ENCODE measurements at regions of chr1 and their contacts with region 1.

Region 1: DNA sequence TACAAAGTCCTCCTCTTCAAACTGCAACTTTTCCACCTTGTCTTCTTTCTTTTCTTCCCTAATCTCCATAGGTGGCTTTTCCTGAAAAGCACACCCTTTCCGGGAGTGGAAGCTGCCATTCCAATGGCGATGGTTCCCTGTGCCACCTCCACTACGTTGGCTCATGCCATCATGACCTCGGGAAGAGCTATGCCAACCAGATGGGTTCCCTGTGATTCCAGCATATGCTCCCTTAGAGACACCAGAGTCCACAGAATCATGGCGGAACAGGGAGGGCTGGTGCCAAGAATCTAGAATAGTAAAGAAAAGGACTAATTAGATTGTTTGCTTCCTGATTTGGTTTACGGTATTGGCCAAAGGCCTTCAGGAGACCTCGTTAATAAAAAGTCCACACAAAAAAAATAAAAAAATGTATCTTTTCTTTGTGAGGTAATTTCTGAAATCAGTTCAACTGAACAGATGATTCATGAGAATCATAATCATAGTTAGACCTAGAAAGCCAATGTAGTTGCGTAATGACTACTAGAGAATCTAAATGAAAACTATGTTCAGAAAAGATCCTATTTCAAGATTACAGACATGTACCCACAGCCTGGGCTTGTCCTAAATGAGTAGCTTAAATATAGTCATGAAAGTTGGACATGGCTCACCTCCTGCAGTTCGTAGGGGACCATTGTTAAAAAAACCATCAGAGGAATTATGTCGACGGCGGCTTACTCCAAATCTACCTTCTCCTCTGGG is 30.9 kb upstream of the CCDC17 start:
- DNase-seq: no peak
- ATAC-seq: no peak
- H3K4me3 ChIP-seq: no peak overlapping the region
- H3K27ac ChIP-seq: no peak overlapping the region
- H3K4me1 ChIP-seq: no peaks in the 10 kb centered on the region
- H3K27me3 ChIP-seq: no peaks in the 10 kb centered on the region
- CTCF ChIP-seq: no peak
- EP300 ChIP-seq: no peak
- POLR2A ChIP-seq: no peak
- RAD21 ChIP-seq: no peak

Region 2: GRCh38 chr1:45455162-45455561 is 199.5 kb before region 1 on chr1:
- CTCF ChIA-PET with region 1: no interaction called
- POLR2A ChIA-PET with region 1: no interaction called
- RAD21 ChIA-PET with region 1: no interaction called
- SMC1A ChIA-PET with region 1: no interaction called
- in situ Hi-C with region 1: no loop called
- intact Hi-C with region 1: no loop called
- DNase-seq: no peak
- ATAC-seq: no peak
- H3K4me3 ChIP-seq: no peak overlapping the region
- H3K27ac ChIP-seq: no peak overlapping the region
- H3K4me1 ChIP-seq: peaks cover 4% of the 10 kb centered on the region; the same call in 1 of the 2 replicates
- H3K27me3 ChIP-seq: no peaks in the 10 kb centered on the region
- CTCF ChIP-seq: no peak
- EP300 ChIP-seq: no peak
- POLR2A ChIP-seq: no peak
- RAD21 ChIP-seq: no peak

Region 3: GRCh38 chr1:45643978-45644377 is 10.7 kb before region 1 on chr1:
- CTCF ChIA-PET with region 1: interaction called, 3 read pairs
- POLR2A ChIA-PET with region 1: interaction called, 4 read pairs
- RAD21 ChIA-PET with region 1: interaction called, 3 read pairs
- SMC1A ChIA-PET with region 1: interaction called, 13 read pairs
- in situ Hi-C with region 1: no loop called
- intact Hi-C with region 1: no loop called
- DNase-seq: no peak
- ATAC-seq: peak; percentile 61
- H3K4me3 ChIP-seq: no peak overlapping the region
- H3K27ac ChIP-seq: no peak overlapping the region
- H3K4me1 ChIP-seq: no peaks in the 10 kb centered on the region
- H3K27me3 ChIP-seq: no peaks in the 10 kb centered on the region
- CTCF ChIP-seq: peak in 2 of 3 experiments; percentile 3 to 22; a peak in 1 of 6 replicates
- EP300 ChIP-seq: no peak
- POLR2A ChIP-seq: no peak
- RAD21 ChIP-seq: 0 out of 2 replicates have a peak, but pooled peaks have one; percentile 11

Region 4: GRCh38 chr1:45924736-45925135 is 270.0 kb after region 1 on chr1:
- CTCF ChIA-PET with region 1: no interaction called
- POLR2A ChIA-PET with region 1: interaction called, 10 read pairs
- RAD21 ChIA-PET with region 1: no interaction called
- SMC1A ChIA-PET with region 1: no interaction called
- in situ Hi-C with region 1: no loop called
- intact Hi-C with region 1: no loop called
- DNase-seq: no peak
- ATAC-seq: no peak
- H3K4me3 ChIP-seq: no peak overlapping the region
- H3K27ac ChIP-seq: no peak overlapping the region
- H3K4me1 ChIP-seq: peaks cover 20% of the 10 kb centered on the region
- H3K27me3 ChIP-seq: no peaks in the 10 kb centered on the region
- CTCF ChIP-seq: no peak
- EP300 ChIP-seq: no peak
- POLR2A ChIP-seq: no peak
- RAD21 ChIP-seq: no peak